Heart right ventricle (tissue), 16 donors: ENCODE measurements at regions of chr1 and their contacts with region 1.

Region 1: DNA sequence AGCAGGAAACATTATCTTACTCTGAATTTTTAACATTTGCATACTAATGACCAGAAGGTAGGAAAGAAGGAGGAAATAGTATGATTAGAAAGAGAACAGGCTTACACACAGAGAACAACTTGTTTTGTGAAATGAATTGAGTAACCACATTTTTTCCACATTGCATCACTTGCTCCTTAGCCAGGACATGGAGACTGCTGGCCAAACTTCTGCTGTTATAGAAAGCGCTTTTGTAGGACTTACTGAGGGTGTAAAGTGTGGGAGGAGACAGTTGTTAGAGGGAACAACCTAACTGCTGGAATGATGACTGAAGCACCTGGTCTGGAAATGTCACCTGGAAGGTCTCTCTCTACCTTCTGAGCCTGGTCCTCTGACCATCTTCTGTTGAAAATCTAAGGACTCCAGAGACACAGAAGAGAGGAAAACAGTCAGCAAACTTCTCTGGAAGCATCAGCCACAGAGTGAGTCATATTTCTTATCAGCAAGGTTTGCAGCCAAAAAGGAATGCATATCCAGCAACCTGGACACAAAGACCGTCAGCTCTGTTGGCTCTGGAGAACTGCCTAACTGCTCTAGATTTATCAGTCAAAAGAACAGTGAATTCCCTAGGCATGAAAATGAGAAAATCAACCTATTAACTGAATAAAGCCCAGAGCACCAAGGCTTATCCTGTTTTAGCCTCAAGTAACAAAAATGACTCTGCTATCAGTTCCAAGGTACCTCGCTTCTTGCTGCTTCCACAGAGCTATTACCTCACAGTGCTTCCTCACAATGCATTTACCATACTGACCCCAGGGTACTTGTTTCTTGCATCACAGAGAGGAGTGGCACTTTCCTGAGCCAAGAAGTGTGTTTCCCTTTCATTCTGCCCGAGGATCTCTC is 88.0 kb upstream of the SLFNL1 start:
- DNase-seq: peak in 1 of 2 donors; percentile 58
- ATAC-seq: peak; percentile 81 to 95 (median 90)
- H3K4me3 ChIP-seq: no peak overlapping the region
- H3K27ac ChIP-seq: peak overlapping the region; percentile 51 to 87 (median 82)
- H3K4me1 ChIP-seq: peaks cover 2 to 29% (median 25%) of the 10 kb centered on the region in 9 donors
- H3K27me3 ChIP-seq: no peaks in the 10 kb centered on the region
- CTCF ChIP-seq: no peak

Region 2: DNA sequence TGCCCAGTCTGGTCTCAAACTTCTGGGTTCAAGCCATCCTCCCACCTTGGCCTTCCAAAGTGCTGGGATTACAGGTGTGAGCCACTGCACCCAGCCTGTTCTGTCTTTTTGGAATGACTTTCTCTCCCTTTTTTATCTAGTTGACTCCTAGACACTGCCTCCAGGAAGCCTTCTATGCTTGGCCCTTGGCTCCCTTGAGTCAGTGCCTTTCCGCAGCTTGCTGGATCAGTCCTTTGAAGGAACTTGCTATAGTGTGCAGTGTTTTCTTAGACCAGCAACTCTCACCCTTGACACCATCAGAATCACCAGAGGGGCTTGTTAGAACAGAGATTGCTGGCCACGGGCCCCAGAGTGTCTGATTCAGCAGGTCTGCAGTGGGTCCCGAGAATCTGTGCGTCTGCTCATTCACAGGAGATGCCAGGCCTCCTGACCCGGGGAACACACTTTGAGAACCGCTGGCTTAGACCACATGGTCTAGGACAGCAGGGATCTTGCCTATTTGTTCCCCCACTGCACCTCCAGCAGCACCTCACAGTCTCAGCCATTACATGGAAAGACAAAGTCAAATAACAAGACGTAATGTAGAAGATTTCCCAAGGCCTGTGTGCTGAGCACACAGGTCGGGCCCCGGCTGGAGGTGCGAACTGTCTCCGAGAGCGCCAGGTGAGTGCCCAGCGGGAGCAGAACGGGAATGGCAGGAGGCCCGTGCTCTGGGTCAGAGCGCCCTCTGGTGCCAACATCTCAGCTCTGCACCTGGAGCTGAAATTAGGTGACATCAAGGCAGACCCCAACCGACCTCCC is 157.4 kb before region 1 on chr1:
- intact Hi-C with region 1: no loop called
- DNase-seq: peak; percentile 61 to 70
- ATAC-seq: peak; percentile 79 to 87 (median 83)
- H3K4me3 ChIP-seq: no peak overlapping the region
- H3K27ac ChIP-seq: no peak overlapping the region
- H3K4me1 ChIP-seq: peaks cover 0 to 14% (median 0%) of the 10 kb centered on the region in 9 donors
- H3K27me3 ChIP-seq: peaks cover 0 to 26% (median 11%) of the 10 kb centered on the region in 7 donors
- CTCF ChIP-seq: peak; percentile 85 to 97 (median 93)

Region 3: GRCh38 chr1:40966417-40966816 is 143.1 kb before region 1 on chr1:
- intact Hi-C with region 1: no loop called
- DNase-seq: no peak
- ATAC-seq: no peak
- H3K4me3 ChIP-seq: no peak overlapping the region
- H3K27ac ChIP-seq: no peak overlapping the region
- H3K4me1 ChIP-seq: no peaks in the 10 kb centered on the region
- H3K27me3 ChIP-seq: no peaks in the 10 kb centered on the region
- CTCF ChIP-seq: no peak

Region 4: GRCh38 chr1:40979233-40980067 is 130.1 kb before region 1 on chr1 and contains the start of gene CTPS1:
- intact Hi-C with region 1: loop called in 2 of 10 experiments (anchors 10 kb)
- DNase-seq: peak; percentile 95 to 98
- ATAC-seq: peak; percentile 95 to 99 (median 96)
- H3K4me3 ChIP-seq: peak within 1 kb of the TSS; percentile 57 to 91 (median 72)
- H3K27ac ChIP-seq: peak within 1 kb of the TSS; percentile 79 to 94 (median 89)
- H3K4me1 ChIP-seq: peaks cover 0 to 32% (median 16%) of the 10 kb centered on the region in 9 donors
- H3K27me3 ChIP-seq: no peaks in the 10 kb centered on the region
- CTCF ChIP-seq: peak in 4 of 9 donors; percentile 10 to 33 (median 20)
- total RNA-seq, gene CTPS1: 6.0 to 12.1 (median 7.1) TPM

Region 5: GRCh38 chr1:41023279-41023990 is 86.1 kb before region 1 on chr1:
- intact Hi-C with region 1: loop called in 1 of 10 experiments (anchors 10 kb)
- DNase-seq: no peak
- ATAC-seq: no peak
- H3K4me3 ChIP-seq: no peak overlapping the region
- H3K27ac ChIP-seq: no peak overlapping the region
- H3K4me1 ChIP-seq: peaks cover 5 to 18% (median 12%) of the 10 kb centered on the region in 9 donors
- H3K27me3 ChIP-seq: no peaks in the 10 kb centered on the region
- CTCF ChIP-seq: peak in 3 of 9 donors; percentile 19 to 23 (median 20)

Region 6: GRCh38 chr1:41045740-41046139 is 63.8 kb before region 1 on chr1:
- intact Hi-C with region 1: loop called in 2 of 10 experiments (anchors 5 to 10 kb)
- DNase-seq: peak in 1 of 2 donors; percentile 51
- ATAC-seq: peak; percentile 37 to 90 (median 82)
- H3K4me3 ChIP-seq: no peak overlapping the region
- H3K27ac ChIP-seq: peak overlapping the region in 9 of 10 donors; percentile 45 to 72 (median 61)
- H3K4me1 ChIP-seq: peaks cover 7 to 35% (median 31%) of the 10 kb centered on the region in 9 donors
- H3K27me3 ChIP-seq: no peaks in the 10 kb centered on the region
- CTCF ChIP-seq: no peak

Region 7: DNA sequence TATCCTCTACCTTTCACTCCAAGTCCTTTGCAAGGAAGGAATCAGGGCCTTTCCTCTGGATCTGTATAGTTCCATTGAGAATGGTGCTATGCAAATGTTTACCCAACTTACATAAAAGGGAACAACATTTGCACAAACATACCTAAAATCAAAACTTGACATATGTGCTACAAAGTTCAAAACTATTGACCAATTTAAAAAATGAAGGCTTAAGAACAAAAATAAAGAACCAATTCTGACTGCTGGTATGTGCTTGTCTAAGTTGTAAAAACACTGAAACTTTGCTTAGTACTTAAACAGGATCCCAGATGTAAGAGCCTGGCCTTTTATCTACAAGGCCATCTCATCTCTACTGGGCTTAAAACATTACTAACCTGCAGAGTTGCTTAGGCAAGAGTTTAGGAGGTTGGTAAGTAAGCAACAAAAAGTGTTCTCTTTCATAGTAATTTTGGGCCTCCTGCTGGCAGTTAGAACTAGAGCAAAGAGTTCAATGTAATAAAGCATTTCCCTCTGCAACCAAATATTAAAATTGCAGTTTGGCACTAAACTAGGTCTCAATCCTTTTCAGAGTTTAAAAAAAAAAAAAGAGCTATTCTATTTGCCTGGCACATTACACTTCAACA is 130.5 kb after region 1 on chr1:
- intact Hi-C with region 1: loop called in 1 of 10 experiments (anchors 10 kb)
- DNase-seq: no peak
- ATAC-seq: peak in 1 of 8 donors; percentile 28
- H3K4me3 ChIP-seq: peak overlapping the region in 3 of 10 donors; percentile 87 to 94 (median 89)
- H3K27ac ChIP-seq: peak overlapping the region in 6 of 10 donors; percentile 93 to 99 (median 97)
- H3K4me1 ChIP-seq: peaks cover 0 to 62% (median 48%) of the 10 kb centered on the region in 9 donors
- H3K27me3 ChIP-seq: no peaks in the 10 kb centered on the region
- CTCF ChIP-seq: peak in 5 of 9 donors; percentile 15 to 43 (median 39)